MCF 10A (cell line): ENCODE measurements at regions of chrX and their contacts with region 1.

Region 1: DNA sequence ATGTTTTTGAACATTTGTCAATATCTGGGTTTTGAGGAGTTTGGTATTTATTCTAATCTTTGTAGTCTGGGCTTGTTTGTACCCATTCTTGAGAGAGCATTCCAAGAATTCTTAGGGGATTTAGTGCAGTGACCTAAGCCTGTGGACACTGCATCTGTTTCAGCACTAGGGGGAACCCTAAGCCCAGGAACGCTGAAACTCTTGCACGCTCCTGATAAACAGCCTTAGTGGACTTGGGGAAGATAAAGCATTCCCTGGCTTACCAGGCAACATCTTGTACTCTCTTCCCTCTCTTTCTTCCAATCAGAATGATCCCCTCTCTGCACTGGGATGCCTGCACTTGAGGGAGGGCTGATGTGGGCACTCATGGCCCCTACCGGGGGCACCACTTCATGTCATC is 654.9 kb upstream of the HTR2C start:
- DNase-seq: peak; percentile 74
- H3K4me3 Mint-ChIP-seq: no peak overlapping the region
- H3K27ac Mint-ChIP-seq: no peak overlapping the region
- H3K4me1 Mint-ChIP-seq: peaks cover 8% of the 10 kb centered on the region
- H3K27me3 Mint-ChIP-seq: peaks cover 58% of the 10 kb centered on the region
- CTCF ChIP-seq: peak; percentile 85

Region 2: DNA sequence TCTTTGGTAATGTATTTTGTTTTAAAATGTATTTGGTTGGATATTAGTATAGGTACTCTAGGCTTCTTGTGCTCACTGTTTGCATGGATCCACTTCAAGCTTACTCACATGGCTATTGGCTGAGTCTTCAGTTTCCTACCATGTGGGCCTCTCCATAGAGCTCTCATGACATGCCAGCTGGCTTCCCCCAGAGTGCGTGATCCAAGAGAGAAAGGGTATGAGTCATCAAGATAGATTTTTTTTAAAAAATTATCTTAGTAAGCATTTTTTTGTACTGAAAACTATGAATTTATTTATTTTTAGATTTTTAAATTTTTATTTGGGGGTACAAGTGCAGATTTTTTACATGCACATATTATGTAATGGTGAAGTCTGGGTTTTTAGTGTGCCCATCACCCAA is 869.3 kb before region 1 on chrX:
- CTCF ChIA-PET with region 1: no interaction called
- POLR2A ChIA-PET with region 1: no interaction called
- intact Hi-C with region 1: no loop called
- DNase-seq: peak; percentile 34
- H3K4me3 Mint-ChIP-seq: no peak overlapping the region
- H3K27ac Mint-ChIP-seq: no peak overlapping the region
- H3K4me1 Mint-ChIP-seq: no peaks in the 10 kb centered on the region
- H3K27me3 Mint-ChIP-seq: peaks cover 29% of the 10 kb centered on the region
- CTCF ChIP-seq: no peak

Region 3: DNA sequence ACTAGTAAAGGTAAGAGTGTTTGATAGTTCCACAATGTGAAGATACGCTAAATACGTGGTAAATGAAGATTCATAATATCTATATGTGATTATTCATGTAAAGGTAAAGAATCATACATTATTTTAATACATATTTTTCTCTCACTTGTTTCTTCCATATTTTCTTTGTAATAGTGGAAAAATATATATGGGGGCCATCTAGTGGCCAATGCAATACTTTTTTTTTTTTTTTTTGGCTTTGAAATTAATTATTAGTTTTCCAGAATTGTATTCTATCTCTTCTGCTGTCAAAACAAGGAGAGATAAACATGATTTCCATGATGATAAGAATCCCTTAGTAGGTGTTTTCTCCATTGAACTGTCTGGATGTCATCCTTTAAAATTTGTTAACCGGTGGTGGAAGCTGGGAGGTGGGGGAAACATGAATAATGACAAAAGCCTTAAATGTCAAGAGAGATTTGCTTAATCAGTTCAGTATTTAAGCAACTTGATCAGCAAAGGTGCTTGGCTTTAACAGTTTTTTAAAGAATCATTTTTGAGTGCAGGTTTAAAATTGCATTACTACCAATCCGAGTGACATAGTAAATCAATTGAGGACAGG is 146.2 kb after region 1 on chrX:
- CTCF ChIA-PET with region 1: interaction called, 3 read pairs
- POLR2A ChIA-PET with region 1: no interaction called
- intact Hi-C with region 1: loop called (anchors 1 kb)
- DNase-seq: no peak
- H3K4me3 Mint-ChIP-seq: no peak overlapping the region
- H3K27ac Mint-ChIP-seq: no peak overlapping the region
- H3K4me1 Mint-ChIP-seq: no peaks in the 10 kb centered on the region
- H3K27me3 Mint-ChIP-seq: peaks cover 64% of the 10 kb centered on the region
- CTCF ChIP-seq: peak; percentile 29

Region 4: DNA sequence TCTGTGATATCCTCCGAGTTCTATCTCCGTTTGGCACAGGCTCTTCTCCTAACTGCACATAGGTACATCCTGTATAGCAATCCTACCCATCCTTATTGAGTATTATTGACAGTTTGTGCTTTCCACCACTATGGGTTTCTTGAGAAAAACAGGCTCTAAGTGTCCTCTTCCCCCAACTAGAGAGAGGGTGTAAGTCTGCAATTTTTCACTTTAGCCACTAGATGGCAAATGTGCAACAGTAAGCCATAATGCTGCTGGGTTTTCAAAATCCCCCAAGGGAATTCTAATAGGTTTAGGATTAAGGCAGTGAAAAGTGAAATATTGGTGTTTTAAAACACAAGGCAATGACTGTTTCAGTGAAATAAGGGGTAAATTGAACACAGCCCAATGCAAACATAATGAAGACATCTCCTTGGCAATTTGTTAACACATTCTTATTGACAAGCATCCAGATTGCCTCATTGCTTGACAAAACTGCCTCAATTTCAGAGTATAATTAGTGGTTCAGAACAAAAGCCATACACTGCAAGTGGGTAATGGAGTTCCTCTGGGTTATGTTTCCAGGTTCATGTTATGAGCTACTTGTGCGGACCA is 415.8 kb after region 1 on chrX:
- CTCF ChIA-PET with region 1: no interaction called
- POLR2A ChIA-PET with region 1: no interaction called
- intact Hi-C with region 1: loop called (anchors 1 kb)
- DNase-seq: peak; percentile 56
- H3K4me3 Mint-ChIP-seq: no peak overlapping the region
- H3K27ac Mint-ChIP-seq: no peak overlapping the region
- H3K4me1 Mint-ChIP-seq: no peaks in the 10 kb centered on the region
- H3K27me3 Mint-ChIP-seq: peaks cover 56% of the 10 kb centered on the region
- CTCF ChIP-seq: peak; percentile 66

Region 5: GRCh38 chrX:114581528-114582263 is 652.7 kb after region 1 on chrX:
- CTCF ChIA-PET with region 1: no interaction called
- POLR2A ChIA-PET with region 1: no interaction called
- intact Hi-C with region 1: loop called (anchors 2 kb)
- DNase-seq: no peak
- H3K4me3 Mint-ChIP-seq: no peak overlapping the region
- H3K27ac Mint-ChIP-seq: no peak overlapping the region
- H3K4me1 Mint-ChIP-seq: no peaks in the 10 kb centered on the region
- H3K27me3 Mint-ChIP-seq: peaks cover 34% of the 10 kb centered on the region
- CTCF ChIP-seq: no peak

Region 6: GRCh38 chrX:114615765-114616164 is 686.8 kb after region 1 on chrX:
- CTCF ChIA-PET with region 1: no interaction called
- POLR2A ChIA-PET with region 1: no interaction called
- intact Hi-C with region 1: no loop called
- DNase-seq: no peak
- H3K4me3 Mint-ChIP-seq: no peak overlapping the region
- H3K27ac Mint-ChIP-seq: no peak overlapping the region
- H3K4me1 Mint-ChIP-seq: peaks cover 6% of the 10 kb centered on the region
- H3K27me3 Mint-ChIP-seq: peaks cover 21% of the 10 kb centered on the region
- CTCF ChIP-seq: no peak

Region 7: GRCh38 chrX:114626323-114626722 is 697.3 kb after region 1 on chrX:
- CTCF ChIA-PET with region 1: no interaction called
- POLR2A ChIA-PET with region 1: no interaction called
- intact Hi-C with region 1: loop called (anchors 2 kb)
- DNase-seq: peak; percentile 41
- H3K4me3 Mint-ChIP-seq: no peak overlapping the region
- H3K27ac Mint-ChIP-seq: no peak overlapping the region
- H3K4me1 Mint-ChIP-seq: no peaks in the 10 kb centered on the region
- H3K27me3 Mint-ChIP-seq: peaks cover 52% of the 10 kb centered on the region
- CTCF ChIP-seq: peak; percentile 46

Region 8: GRCh38 chrX:115147220-115147619 is 1218.2 kb after region 1 on chrX:
- CTCF ChIA-PET with region 1: no interaction called
- POLR2A ChIA-PET with region 1: no interaction called
- intact Hi-C with region 1: loop called (anchors 5 kb)
- DNase-seq: peak; percentile 25
- H3K4me3 Mint-ChIP-seq: no peak overlapping the region
- H3K27ac Mint-ChIP-seq: no peak overlapping the region
- H3K4me1 Mint-ChIP-seq: no peaks in the 10 kb centered on the region
- H3K27me3 Mint-ChIP-seq: peaks cover 49% of the 10 kb centered on the region
- CTCF ChIP-seq: peak; percentile 46